GM12878 (cell line): ENCODE measurements at regions of chr15 and their contacts with region 1.

Region 1: GRCh38 chr15:101294731-101295606 is at the start of gene SNRPA1:
- DNase-seq: peak; percentile 68
- ATAC-seq: peak; percentile 88
- H3K4me3 ChIP-seq: peak within 1 kb of the TSS; percentile 87
- H3K27ac ChIP-seq: peak within 1 kb of the TSS; percentile 95
- H3K4me1 ChIP-seq: peaks cover 8% of the 10 kb centered on the region
- H3K27me3 ChIP-seq: no peaks in the 10 kb centered on the region
- CTCF ChIP-seq: no peak
- EP300 ChIP-seq: 0 out of 4 replicates have a peak, but pooled peaks of 1 of the 2 experiments have one; percentile 7
- POLR2A ChIP-seq: peak; percentile 95
- RAD21 ChIP-seq: no peak
- polyA plus RNA-seq, gene SNRPA1: 174 to 238 TPM

Region 2: GRCh38 chr15:101207867-101208288 is 87.1 kb before region 1 on chr15:
- CTCF ChIA-PET with region 1: no interaction called
- POLR2A ChIA-PET with region 1: no interaction called
- RAD21 ChIA-PET with region 1: no interaction called
- SMC1A ChIA-PET with region 1: no interaction called
- in situ Hi-C with region 1: no loop called
- intact Hi-C with region 1: no loop called
- DNase-seq: no peak
- ATAC-seq: no peak
- H3K4me3 ChIP-seq: no peak overlapping the region
- H3K27ac ChIP-seq: no peak overlapping the region
- H3K4me1 ChIP-seq: peaks cover 20% of the 10 kb centered on the region
- H3K27me3 ChIP-seq: no peaks in the 10 kb centered on the region
- CTCF ChIP-seq: no peak
- EP300 ChIP-seq: no peak
- POLR2A ChIP-seq: no peak
- RAD21 ChIP-seq: no peak

Region 3: DNA sequence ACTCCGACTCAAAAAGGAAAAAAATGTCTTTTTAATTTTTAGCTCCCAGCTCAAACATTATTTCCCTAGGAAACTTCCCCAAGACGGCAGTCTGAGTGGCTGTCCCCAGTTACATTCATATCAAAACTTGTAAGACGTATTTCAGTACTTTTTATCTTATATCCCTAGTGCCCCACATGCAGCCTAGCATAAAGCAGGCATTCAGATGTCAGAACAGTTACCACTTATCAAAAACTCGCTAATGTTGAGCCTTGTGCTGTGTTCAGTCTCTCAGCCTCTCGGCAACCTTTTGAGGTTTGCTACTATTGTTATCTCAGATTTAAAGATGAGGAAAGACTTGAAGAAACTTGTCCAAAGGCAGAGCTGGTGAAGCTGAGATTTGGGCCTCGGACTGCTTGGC is 11.0 kb before region 1 on chr15:
- CTCF ChIA-PET with region 1: interaction called, 33 read pairs
- POLR2A ChIA-PET with region 1: interaction called, 11 read pairs
- RAD21 ChIA-PET with region 1: interaction called, 3 read pairs
- SMC1A ChIA-PET with region 1: interaction called, 9 read pairs
- in situ Hi-C with region 1: no loop called
- intact Hi-C with region 1: no loop called
- DNase-seq: no peak
- ATAC-seq: no peak; the same call in 2 of the 3 replicates
- H3K4me3 ChIP-seq: no peak overlapping the region
- H3K27ac ChIP-seq: no peak overlapping the region
- H3K4me1 ChIP-seq: no peaks in the 10 kb centered on the region; the same call in 1 of the 2 replicates
- H3K27me3 ChIP-seq: no peaks in the 10 kb centered on the region
- CTCF ChIP-seq: no peak
- EP300 ChIP-seq: no peak
- POLR2A ChIP-seq: no peak
- RAD21 ChIP-seq: no peak

Region 4: GRCh38 chr15:101723874-101724674 is 429.1 kb after region 1 on chr15 and contains the start of gene TARS3:
- CTCF ChIA-PET with region 1: no interaction called
- POLR2A ChIA-PET with region 1: no interaction called
- RAD21 ChIA-PET with region 1: no interaction called
- SMC1A ChIA-PET with region 1: interaction called, 3 read pairs
- in situ Hi-C with region 1: no loop called
- intact Hi-C with region 1: loop called (anchors 2 kb)
- DNase-seq: peak; percentile 37
- ATAC-seq: peak; percentile 95
- H3K4me3 ChIP-seq: peak within 1 kb of the TSS; percentile 87
- H3K27ac ChIP-seq: peak within 1 kb of the TSS; percentile 65
- H3K4me1 ChIP-seq: peaks cover 3% of the 10 kb centered on the region; the same call in 1 of the 2 replicates
- H3K27me3 ChIP-seq: no peaks in the 10 kb centered on the region
- CTCF ChIP-seq: peak in 2 of 3 experiments; percentile 12 to 13; a peak in 2 of 6 replicates
- EP300 ChIP-seq: no peak
- POLR2A ChIP-seq: peak; percentile 97
- RAD21 ChIP-seq: no peak
- polyA plus RNA-seq, gene TARS3: 1.4 to 2.2 TPM